ENCODE measurements at regions of chr14 and their contacts with region 1.

Region 1: DNA sequence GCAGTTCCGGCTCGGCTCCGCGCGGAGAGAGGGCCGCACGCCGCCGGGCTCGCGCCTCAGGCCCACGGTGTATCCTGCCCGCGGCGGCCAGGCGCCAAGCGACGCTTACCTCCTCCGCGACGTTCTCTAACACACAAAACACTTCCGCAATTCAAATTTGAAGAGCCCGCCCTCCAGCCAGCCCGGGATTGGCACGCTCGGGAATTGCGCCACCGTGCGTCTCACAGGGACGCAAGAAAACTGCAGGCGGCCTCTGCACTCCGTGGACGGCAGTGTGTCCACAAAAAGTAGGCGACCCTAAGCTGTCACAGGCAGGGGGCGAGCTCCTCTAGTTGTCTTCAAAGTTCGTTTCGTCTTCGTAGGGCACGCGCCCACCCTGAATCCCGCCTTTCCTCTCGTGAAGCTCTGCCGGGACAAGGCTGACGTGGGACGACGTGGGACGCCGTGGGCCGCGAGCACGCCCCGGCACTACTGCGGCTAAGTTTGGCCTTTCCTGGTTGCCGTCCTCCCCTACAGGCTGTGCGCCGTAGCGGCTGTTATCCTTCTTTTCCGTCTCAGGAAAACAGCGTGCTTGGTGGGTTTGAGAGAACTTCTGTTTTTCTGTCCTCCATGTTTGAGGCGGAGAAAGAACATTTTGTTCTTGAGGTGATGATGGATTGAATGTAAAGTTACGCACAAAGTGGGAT is at the start of gene MIS18BP1:
- DNase-seq: peak; percentile 97
- H3K4me3 ChIP-seq: peak within 1 kb of the TSS; percentile 77
- H3K4me3 Mint-ChIP-seq: peak within 1 kb of the TSS; percentile 86
- H3K27ac Mint-ChIP-seq: peak within 1 kb of the TSS; percentile 96
- H3K4me1 ChIP-seq: no peaks in the 10 kb centered on the region
- H3K4me1 Mint-ChIP-seq: no peaks in the 10 kb centered on the region
- H3K27me3 ChIP-seq: no peaks in the 10 kb centered on the region
- H3K27me3 Mint-ChIP-seq: no peaks in the 10 kb centered on the region
- CTCF ChIP-seq: peak; percentile 49 to 82
- total RNA-seq, gene MIS18BP1: 31.4 and 38.4 TPM in 2 replicates

Region 2: DNA sequence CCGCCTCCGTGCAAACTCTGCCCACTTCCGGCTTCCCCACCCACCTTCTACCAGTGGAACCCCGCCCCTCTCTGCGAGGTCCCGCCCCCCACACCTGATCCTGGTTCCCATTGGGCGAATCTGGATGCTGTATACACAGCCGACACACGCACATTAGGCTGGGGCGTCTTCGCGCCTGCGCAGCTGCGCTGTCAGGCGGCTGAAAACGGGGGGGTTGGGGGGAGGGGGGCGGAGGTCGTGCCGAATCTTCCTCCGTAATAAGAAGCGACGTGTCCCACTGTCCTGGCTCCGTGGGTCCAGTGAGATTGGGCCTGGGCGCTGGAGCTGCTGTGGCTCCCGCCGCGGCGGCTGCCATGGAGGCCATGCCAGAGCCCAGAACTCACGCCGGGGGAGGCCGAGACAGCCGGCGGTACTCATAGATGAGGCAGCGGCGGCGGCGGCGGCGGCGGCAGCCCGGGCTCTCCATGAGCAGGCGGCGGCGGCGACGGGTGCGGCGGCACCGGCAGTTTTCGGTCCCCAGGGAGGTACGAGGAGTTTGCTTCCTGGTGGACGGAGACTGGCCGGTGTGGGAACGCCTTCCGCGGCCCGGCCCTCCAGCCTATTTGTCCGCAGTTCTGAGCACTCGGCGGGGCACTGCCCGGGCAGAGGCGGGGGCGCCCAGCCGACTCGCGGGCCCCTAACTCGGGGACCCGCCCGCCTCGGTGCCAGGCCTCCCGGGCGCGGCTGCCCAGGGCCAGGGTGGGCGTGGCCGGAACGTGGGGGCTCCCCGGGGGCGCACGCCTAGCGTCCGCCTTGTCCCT is 356.0 kb before region 1 on chr14:
- CTCF ChIA-PET with region 1: no interaction called
- POLR2A ChIA-PET with region 1: no interaction called
- intact Hi-C with region 1: loop called (anchors 5 kb)
- DNase-seq: peak; percentile 83 to 95
- H3K4me3 ChIP-seq: peak overlapping the region; percentile 66
- H3K4me3 Mint-ChIP-seq: peak overlapping the region; percentile 69
- H3K27ac Mint-ChIP-seq: peak overlapping the region; percentile 84
- H3K4me1 ChIP-seq: 0 out of 2 replicates have a peak, but pooled peaks cover 3% of the 10 kb centered on the region
- H3K4me1 Mint-ChIP-seq: no peaks in the 10 kb centered on the region
- H3K27me3 ChIP-seq: no peaks in the 10 kb centered on the region
- H3K27me3 Mint-ChIP-seq: no peaks in the 10 kb centered on the region
- CTCF ChIP-seq: no peak

Region 3: DNA sequence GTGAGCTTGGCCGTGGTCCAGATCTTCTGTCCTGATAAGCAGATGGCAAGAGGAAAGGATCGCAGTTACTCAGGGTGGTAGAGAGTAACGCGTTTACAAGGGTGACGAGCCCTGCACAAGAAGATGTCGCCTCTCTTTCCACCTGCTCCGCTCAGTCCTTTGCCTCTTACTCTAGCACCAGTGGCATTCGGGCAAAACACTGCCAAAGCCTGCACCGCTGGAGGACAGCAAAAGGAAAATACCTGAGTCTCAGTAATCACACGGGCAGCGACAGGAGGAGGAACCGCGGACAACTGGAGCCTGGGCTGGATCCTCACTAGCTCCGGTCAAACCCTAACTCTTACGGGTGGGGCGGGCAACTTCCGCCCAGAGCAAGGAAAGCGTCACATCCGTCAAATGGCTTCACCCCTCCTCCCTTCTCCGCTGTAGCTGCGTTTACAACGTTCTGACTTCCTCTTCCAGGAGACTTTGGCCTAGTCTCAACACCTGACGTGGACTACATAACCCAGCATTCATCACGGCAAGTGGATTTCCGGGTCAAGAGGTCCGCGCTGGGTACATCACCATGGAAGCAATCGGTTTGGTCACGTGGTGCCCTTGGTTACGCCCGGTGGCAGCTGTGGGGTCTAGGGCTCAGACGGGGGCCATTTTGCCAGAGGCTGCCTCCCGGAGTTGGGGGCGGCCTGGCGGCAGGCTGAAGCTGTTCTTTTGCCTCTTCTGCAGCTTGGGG is 291.4 kb before region 1 on chr14 and contains the starts of genes KLHL28 and TOGARAM1:
- CTCF ChIA-PET with region 1: no interaction called
- POLR2A ChIA-PET with region 1: interaction called, 3 read pairs
- intact Hi-C with region 1: loop called (anchors 5 kb)
- DNase-seq: peak; percentile 90 to 95
- H3K4me3 ChIP-seq: peak within 1 kb of the TSS; percentile 63
- H3K4me3 Mint-ChIP-seq: no peak within 1 kb of the TSS
- H3K27ac Mint-ChIP-seq: no peak within 1 kb of the TSS
- H3K4me1 ChIP-seq: no peaks in the 10 kb centered on the region
- H3K4me1 Mint-ChIP-seq: peaks cover 8% of the 10 kb centered on the region
- H3K27me3 ChIP-seq: no peaks in the 10 kb centered on the region
- H3K27me3 Mint-ChIP-seq: no peaks in the 10 kb centered on the region
- CTCF ChIP-seq: no peak
- total RNA-seq, gene KLHL28: 3.6 and 4.7 TPM in 2 replicates
- total RNA-seq, gene TOGARAM1: 5.9 and 7.1 TPM in 2 replicates

Region 4: DNA sequence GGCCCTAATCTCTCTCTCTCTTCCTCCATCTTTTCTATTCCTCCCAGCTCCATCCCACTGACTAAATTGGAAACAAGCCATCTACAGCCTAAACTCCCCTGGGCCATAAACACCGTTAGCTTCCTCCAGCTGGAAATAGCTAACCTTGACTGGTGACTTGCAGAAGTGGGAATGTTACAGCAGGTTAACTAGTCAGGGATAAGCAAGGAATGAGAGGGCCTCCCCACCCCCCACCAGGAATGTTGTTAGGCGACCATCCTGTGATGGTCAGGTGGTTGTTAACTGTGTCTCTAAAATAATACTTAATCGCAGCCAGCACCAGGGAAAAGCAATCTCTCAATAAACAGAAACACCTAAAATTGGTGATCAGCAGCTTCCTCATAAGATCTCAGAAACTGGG is 41.0 kb before region 1 on chr14:
- CTCF ChIA-PET with region 1: no interaction called
- POLR2A ChIA-PET with region 1: no interaction called
- intact Hi-C with region 1: loop called (anchors 1 kb)
- DNase-seq: peak; percentile 73 to 79
- H3K4me3 ChIP-seq: no peak overlapping the region
- H3K4me3 Mint-ChIP-seq: peak overlapping the region; percentile 48
- H3K27ac Mint-ChIP-seq: peak overlapping the region; percentile 54
- H3K4me1 ChIP-seq: peaks cover 62% of the 10 kb centered on the region
- H3K4me1 Mint-ChIP-seq: peaks cover 30% of the 10 kb centered on the region
- H3K27me3 ChIP-seq: no peaks in the 10 kb centered on the region
- H3K27me3 Mint-ChIP-seq: no peaks in the 10 kb centered on the region
- CTCF ChIP-seq: no peak

Region 5: DNA sequence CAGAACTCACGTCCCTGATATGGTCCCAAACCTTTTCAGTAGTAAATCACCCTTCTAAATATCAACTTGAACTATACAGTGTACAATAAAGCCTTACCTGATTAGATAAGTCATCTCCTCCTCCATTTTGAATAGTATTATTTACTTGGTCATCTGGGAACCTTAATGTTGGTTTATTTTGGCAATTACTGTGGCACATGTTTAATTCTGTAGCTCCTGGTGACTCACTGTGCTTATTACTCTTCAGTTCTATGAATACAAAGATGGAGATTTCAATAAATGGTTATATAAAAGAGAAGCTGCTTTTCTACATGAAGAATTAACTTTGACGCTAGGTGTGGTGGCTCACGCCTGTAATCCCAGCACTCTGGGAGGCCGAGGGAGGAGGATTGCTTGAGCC is 25.6 kb before region 1 on chr14:
- CTCF ChIA-PET with region 1: no interaction called
- POLR2A ChIA-PET with region 1: no interaction called
- intact Hi-C with region 1: no loop called
- DNase-seq: no peak
- H3K4me3 ChIP-seq: no peak overlapping the region
- H3K4me3 Mint-ChIP-seq: no peak overlapping the region
- H3K27ac Mint-ChIP-seq: no peak overlapping the region
- H3K4me1 ChIP-seq: no peaks in the 10 kb centered on the region
- H3K4me1 Mint-ChIP-seq: no peaks in the 10 kb centered on the region
- H3K27me3 ChIP-seq: no peaks in the 10 kb centered on the region
- H3K27me3 Mint-ChIP-seq: no peaks in the 10 kb centered on the region
- CTCF ChIP-seq: no peak

Region 6: DNA sequence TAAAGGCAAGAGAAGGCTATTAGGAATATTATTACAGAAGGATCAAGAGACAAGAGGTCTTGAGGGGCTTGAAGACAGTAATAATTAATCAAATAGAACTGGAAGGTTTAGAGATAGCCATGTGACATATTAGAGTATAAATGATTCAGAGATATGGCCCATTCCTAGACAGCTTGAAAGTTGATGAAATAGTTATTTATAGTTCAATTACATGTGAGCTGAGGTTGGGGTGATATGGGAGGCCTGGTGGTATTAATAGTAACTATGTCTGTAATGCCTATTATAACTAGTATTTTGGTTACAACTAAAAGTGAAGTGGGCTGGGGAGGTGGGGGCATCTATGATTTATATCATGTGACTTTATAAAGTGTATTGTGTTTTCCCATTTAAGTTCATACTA is 13.9 kb after region 1 on chr14:
- CTCF ChIA-PET with region 1: interaction called, 15 read pairs
- POLR2A ChIA-PET with region 1: no interaction called
- intact Hi-C with region 1: no loop called
- DNase-seq: no peak
- H3K4me3 ChIP-seq: no peak overlapping the region
- H3K4me3 Mint-ChIP-seq: no peak overlapping the region
- H3K27ac Mint-ChIP-seq: no peak overlapping the region
- H3K4me1 ChIP-seq: no peaks in the 10 kb centered on the region
- H3K4me1 Mint-ChIP-seq: no peaks in the 10 kb centered on the region
- H3K27me3 ChIP-seq: no peaks in the 10 kb centered on the region
- H3K27me3 Mint-ChIP-seq: no peaks in the 10 kb centered on the region
- CTCF ChIP-seq: no peak